MCF 10A (cell line): ENCODE measurements at regions of chr1 and their contacts with region 1.

Region 1: GRCh38 chr1:248404024-248404423 is 1.2 kb downstream of the OR2T1 start:
- DNase-seq: peak; percentile 27
- H3K4me3 Mint-ChIP-seq: no peak overlapping the region
- H3K27ac Mint-ChIP-seq: no peak overlapping the region
- H3K4me1 Mint-ChIP-seq: peaks cover 5% of the 10 kb centered on the region
- H3K27me3 Mint-ChIP-seq: no peaks in the 10 kb centered on the region
- CTCF ChIP-seq: no peak

Region 2: DNA sequence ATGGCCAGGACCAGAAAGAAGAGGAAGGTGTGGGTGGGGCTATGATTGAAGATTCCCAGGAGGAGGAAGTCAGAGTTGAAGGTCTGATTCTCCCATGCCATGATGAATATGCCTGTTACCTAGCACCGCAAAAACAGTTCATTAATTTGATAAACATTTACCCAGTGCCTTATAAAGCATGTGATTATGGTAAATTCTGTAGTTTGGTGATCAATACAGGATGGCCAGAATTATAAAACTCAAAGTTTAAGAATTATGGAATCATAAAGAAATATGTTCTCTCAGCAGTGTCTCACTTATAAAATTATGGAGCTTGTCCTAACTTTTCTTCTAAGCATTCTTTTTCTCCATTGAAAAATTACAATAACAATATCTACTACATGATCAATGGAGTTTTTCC is 79.6 kb before region 1 on chr1 and contains the start of gene OR2M7:
- CTCF ChIA-PET with region 1: no interaction called
- POLR2A ChIA-PET with region 1: no interaction called
- intact Hi-C with region 1: no loop called
- DNase-seq: no peak
- H3K4me3 Mint-ChIP-seq: no peak within 1 kb of the TSS
- H3K27ac Mint-ChIP-seq: no peak within 1 kb of the TSS
- H3K4me1 Mint-ChIP-seq: no peaks in the 10 kb centered on the region
- H3K27me3 Mint-ChIP-seq: no peaks in the 10 kb centered on the region
- CTCF ChIP-seq: no peak
- total RNA-seq, gene OR2M7: not detected in 2 replicates

Region 3: DNA sequence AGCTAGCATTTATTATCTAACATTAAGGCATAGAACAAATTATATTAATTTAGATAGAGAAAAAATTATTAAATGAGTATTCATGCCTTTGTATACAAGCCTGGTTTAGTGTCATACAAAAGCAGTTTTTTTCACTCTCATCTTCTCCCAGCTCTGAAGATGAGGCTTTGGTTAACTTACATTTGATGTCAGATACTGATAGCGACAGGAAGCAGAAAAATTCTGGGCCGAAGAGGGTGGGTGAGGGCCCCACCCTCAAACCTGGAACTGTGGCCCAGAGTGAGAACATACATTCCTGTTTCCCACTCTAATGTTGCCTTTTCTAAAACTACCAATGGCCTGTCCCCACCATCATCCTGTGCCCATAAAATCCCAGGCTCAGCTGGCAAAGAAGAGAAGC is 13.8 kb after region 1 on chr1:
- CTCF ChIA-PET with region 1: interaction called, 15 read pairs
- POLR2A ChIA-PET with region 1: no interaction called
- intact Hi-C with region 1: no loop called
- DNase-seq: no peak
- H3K4me3 Mint-ChIP-seq: no peak overlapping the region
- H3K27ac Mint-ChIP-seq: no peak overlapping the region
- H3K4me1 Mint-ChIP-seq: no peaks in the 10 kb centered on the region
- H3K27me3 Mint-ChIP-seq: no peaks in the 10 kb centered on the region
- CTCF ChIP-seq: no peak

Region 4: GRCh38 chr1:248611883-248612414 is 207.9 kb after region 1 on chr1:
- CTCF ChIA-PET with region 1: interaction called, 3 read pairs
- POLR2A ChIA-PET with region 1: no interaction called
- intact Hi-C with region 1: loop called (anchors 1 kb)
- DNase-seq: peak; percentile 52
- H3K4me3 Mint-ChIP-seq: no peak overlapping the region
- H3K27ac Mint-ChIP-seq: no peak overlapping the region
- H3K4me1 Mint-ChIP-seq: peaks cover 8% of the 10 kb centered on the region
- H3K27me3 Mint-ChIP-seq: no peaks in the 10 kb centered on the region
- CTCF ChIP-seq: no peak

Region 5: GRCh38 chr1:248686815-248687214 is 282.8 kb after region 1 on chr1:
- CTCF ChIA-PET with region 1: interaction called, 4 read pairs
- POLR2A ChIA-PET with region 1: interaction called, 3 read pairs
- intact Hi-C with region 1: loop called (anchors 1 kb)
- DNase-seq: peak; percentile 38
- H3K4me3 Mint-ChIP-seq: no peak overlapping the region
- H3K27ac Mint-ChIP-seq: peak overlapping the region; percentile 0
- H3K4me1 Mint-ChIP-seq: peaks cover 18% of the 10 kb centered on the region
- H3K27me3 Mint-ChIP-seq: no peaks in the 10 kb centered on the region
- CTCF ChIP-seq: peak; percentile 81